Left colon (tissue), 2 donors: ENCODE measurements at regions of chr13 and their contacts with region 1.

Region 1: DNA sequence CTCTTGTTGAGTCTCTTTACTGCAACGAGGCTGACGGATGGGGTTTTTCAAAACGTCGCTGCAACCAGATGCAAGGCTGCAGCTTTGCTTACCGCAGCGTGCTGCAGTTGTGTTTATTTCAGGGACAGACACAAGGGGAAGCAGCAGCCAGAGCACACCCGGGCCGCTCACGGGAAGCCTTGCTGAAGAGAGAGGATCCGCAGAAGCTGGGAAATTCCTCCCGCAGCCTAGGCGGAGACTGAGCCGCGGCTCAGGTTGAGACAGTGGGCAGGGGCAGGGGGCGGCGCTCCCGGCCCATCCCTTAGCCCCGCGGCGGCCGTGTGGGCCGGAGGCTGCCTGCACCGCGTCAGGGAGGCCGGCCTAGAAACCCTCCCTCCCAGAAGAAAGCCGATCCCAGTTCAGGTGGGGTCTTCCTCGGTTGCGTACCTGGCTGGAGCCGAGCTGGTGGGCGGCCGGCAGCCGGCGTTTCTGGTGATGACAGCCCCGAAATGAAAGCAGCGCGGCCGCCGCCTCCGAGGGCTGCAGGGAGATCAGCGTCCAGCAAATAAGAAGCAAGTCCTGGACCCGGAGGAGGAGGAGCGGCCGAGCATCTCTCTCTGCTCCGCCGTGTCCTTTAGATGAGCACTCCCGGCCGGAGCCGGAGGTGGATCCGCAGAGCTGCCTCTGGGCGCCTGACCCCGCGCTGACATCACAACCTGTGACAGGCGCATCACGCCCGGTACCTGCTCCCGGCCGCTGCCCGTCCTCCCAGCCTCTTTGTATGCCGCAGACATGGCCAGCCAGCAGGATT is at the start of gene FRY:
- DNase-seq: peak; percentile 63 to 67
- ATAC-seq: peak; percentile 81
- total RNA-seq, gene FRY: 10.3 to 13.7 TPM

Region 2: GRCh38 chr13:31686670-31687425 is 344.4 kb before region 1 on chr13:
- intact Hi-C with region 1: no loop called
- DNase-seq: no peak
- ATAC-seq: no peak

Region 3: GRCh38 chr13:31706105-31706504 is 325.1 kb before region 1 on chr13:
- intact Hi-C with region 1: no loop called
- DNase-seq: no peak
- ATAC-seq: no peak

Region 4: DNA sequence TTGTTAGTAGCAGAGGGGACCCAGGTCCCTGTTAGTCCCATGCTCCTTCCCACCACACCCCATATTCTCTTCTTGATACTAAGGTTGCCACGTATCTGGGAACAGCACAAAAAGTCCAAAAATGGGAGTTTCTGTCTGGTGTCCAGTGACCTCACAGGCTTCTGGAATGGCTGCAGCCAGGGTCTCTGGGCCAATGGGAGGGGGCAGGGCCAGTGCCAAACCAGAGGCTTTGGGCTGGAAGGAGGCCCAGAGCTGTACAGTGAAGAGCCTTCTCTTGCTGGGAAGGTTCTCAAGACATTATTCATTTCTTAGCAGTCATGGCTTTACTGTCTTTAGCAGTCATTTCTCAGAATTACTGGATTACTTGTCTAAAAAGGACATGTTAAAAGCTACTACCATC is 119.6 kb after region 1 on chr13:
- intact Hi-C with region 1: loop called in 1 of 2 experiments (anchors 10 kb)
- DNase-seq: peak; percentile 26 to 37
- ATAC-seq: no peak

Region 5: DNA sequence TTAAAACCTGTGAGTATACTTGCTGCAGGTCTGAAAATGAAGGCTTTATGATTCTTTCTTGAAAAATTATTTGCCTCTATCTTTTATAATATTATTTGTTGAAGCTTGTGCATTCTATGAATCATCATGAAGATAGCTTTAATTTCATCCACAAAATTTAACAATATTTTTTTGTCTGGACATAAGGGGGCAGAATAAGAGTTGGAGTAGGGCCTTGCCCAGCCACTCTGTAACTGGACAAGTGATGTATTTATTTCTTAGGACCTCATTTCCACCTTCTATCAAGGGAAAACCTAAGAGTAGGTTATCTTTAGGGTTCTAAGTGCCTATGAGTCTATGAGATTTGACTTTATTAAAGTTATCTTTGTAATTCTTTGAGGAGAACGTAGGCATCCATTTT is 346.8 kb after region 1 on chr13:
- intact Hi-C with region 1: no loop called
- DNase-seq: no peak
- ATAC-seq: no peak